ENCODE measurements at regions of chr3 and their contacts with region 1.

Region 1: GRCh38 chr3:32510075-32510724 is 7.5 kb upstream of the CMTM6 start:
- DNase-seq: peak; percentile 42
- ATAC-seq: peak; percentile 97

Region 2: DNA sequence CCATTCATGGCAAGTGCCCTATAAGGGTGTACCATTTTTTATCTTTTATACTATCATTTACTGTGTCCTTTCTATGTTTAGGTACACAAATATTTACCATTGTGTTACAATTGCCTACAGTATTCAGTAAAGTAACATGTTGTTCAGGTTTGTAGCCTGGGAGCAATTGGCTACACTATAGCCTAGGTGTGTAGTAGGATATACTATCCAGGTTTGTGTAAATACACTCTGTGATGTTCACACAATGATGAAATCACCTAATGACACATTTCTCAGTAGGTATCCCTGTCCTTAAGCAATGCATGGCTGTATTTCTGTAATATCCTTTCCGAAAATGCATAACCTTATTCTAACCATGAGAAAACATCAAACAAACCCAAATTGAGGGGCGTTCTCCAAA is 156.9 kb after region 1 on chr3:
- intact Hi-C with region 1: loop called (anchors 5 kb)
- DNase-seq: no peak
- ATAC-seq: no peak

Measured in left ventricle myocardium superior (tissue), 1 donor.